Ovary (tissue), 10 donors: ENCODE measurements at regions of chr10 and their contacts with region 1.

Region 1: DNA sequence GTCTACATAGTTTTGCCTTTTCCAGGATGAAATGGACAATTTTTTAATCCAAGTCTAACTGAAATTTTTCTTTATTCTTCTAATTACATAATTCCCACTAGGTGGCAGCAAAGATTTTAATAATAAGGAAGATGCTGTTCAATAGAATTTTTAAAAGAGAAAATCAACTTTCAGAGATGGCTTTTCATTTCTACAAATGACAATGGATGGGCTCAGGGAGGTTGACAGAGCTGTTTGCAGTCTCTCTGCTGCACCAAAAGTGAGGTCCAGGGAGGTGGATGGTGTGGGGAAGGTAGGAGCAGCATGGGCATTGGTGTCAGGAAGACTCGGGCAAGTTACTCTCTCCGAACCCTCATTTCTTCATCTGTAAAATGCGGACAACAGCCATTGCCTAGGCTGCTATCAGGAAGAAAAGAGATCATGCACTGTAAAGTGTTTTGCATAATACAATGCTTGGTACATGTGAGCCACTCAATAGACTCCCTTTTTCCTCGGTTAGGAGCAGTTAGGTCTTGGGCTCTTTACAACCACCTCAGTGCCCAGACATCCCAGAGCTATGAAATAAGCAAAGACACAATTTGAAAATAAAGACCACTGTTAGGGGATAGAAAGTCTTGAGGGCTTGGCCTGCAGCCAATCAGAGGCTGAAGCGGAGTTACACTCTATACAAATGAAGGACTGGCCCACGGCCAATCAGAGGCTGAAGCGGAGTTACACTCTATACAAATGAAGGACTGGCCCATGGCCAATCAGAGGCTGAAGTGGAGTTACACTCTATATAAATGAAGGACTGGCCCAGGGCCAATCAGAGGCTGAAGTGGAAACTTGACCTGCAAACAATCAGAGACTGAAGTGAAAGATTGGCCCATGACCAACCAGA is 107.1 kb downstream of the ABLIM1 start:
- DNase-seq: peak; percentile 44 to 74 (median 63)
- H3K4me3 ChIP-seq: no peak overlapping the region
- H3K27ac ChIP-seq: no peak overlapping the region
- H3K4me1 ChIP-seq: peaks cover 2% of the 10 kb centered on the region
- H3K27me3 ChIP-seq: no peaks in the 10 kb centered on the region
- CTCF ChIP-seq: peak; percentile 51 to 60 (median 55)
- EP300 ChIP-seq: no peak
- POLR2A ChIP-seq: no peak

Region 2: GRCh38 chr10:114470956-114471905 is 79.8 kb before region 1 on chr10:
- intact Hi-C with region 1: loop called in 3 of 4 experiments (anchors 2 to 5 kb)
- DNase-seq: peak; percentile 58 to 76 (median 72)
- H3K4me3 ChIP-seq: no peak overlapping the region
- H3K27ac ChIP-seq: peak overlapping the region; percentile 15 to 43
- H3K4me1 ChIP-seq: peaks cover 2% of the 10 kb centered on the region
- H3K27me3 ChIP-seq: no peaks in the 10 kb centered on the region
- CTCF ChIP-seq: peak; percentile 68 to 82 (median 79)
- EP300 ChIP-seq: no peak
- POLR2A ChIP-seq: no peak

Region 3: DNA sequence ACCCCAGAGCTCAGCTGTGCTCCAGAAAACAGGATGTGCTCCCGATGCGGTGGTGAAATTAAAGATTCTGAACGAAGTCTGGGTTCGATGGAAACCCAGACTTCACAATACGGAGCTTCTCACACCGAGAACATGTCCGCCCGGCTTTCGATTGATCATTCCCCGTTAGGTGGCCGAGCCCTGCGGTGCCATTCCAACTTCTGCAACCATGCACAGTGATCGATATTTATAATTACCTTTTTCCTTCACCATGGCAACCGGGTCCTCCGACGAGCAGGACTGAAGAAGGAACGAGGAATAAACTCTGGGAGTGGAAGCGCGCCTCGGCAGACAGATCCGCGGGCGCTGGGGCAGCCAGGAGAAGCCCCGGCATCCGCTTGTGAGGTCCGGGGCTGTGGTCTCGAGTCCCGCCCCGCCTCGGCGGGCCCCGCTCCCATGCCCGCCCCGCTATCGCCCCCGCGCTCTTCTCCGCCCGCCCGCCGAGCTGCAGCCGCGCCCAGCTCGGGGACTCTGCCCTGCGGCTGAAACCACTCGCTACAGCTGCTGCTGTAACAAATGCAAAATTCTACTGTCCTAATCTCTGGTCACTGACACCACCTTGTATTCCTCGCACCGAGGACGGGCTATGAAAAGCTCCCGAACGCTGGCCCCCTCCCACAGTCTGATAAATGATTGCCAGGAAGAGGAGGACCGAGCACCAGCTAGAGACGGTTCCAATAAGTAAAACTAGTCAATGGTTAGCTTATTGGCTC is 80.8 kb after region 1 on chr10:
- intact Hi-C with region 1: loop called in 1 of 4 experiments (anchors 10 kb)
- DNase-seq: peak; percentile 27 to 55 (median 47)
- H3K4me3 ChIP-seq: peak overlapping the region; percentile 58
- H3K27ac ChIP-seq: no peak overlapping the region
- H3K4me1 ChIP-seq: peaks cover 9% of the 10 kb centered on the region
- H3K27me3 ChIP-seq: no peaks in the 10 kb centered on the region
- CTCF ChIP-seq: no peak
- EP300 ChIP-seq: no peak
- POLR2A ChIP-seq: no peak

Region 4: DNA sequence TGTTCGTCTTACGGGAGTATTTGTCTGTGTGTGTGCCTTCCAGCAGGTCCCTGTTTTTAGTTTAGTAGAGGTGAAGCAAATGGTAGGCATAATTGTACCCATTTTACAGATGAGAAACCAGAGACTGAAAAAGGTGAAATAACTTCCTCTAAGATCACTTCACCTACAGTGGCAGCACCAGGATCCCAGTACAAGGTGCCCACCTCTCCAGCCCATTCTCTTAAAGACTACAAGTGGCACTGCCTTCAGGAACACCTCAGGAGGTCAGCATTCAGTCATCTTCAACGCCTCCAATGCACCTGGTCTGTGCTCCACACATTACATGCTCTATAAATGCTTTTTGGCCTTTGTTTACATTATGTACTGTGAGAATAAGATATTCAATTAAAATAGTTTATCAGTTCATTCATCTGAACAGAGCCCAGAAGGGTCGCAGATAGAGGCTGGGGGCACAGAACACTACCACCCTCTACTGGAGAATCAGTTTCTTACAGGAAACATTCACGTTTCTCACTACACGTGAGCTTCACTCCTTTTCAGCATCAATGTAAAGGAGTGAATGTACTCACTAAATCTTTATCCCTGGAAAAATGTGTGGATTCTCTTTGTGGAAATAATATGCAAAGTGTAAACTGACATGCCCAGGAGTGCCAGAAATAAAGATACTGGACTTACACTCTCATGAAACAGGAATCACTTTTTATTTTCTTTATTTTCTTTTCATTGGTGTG is 152.5 kb after region 1 on chr10:
- intact Hi-C with region 1: loop called in 3 of 4 experiments (anchors 10 kb)
- DNase-seq: no peak
- H3K4me3 ChIP-seq: no peak overlapping the region
- H3K27ac ChIP-seq: no peak overlapping the region
- H3K4me1 ChIP-seq: no peaks in the 10 kb centered on the region
- H3K27me3 ChIP-seq: no peaks in the 10 kb centered on the region
- CTCF ChIP-seq: no peak
- EP300 ChIP-seq: no peak
- POLR2A ChIP-seq: no peak